Natural killer cell (primary cell): ENCODE measurements at regions of chr17 and their contacts with region 1.

Region 1: DNA sequence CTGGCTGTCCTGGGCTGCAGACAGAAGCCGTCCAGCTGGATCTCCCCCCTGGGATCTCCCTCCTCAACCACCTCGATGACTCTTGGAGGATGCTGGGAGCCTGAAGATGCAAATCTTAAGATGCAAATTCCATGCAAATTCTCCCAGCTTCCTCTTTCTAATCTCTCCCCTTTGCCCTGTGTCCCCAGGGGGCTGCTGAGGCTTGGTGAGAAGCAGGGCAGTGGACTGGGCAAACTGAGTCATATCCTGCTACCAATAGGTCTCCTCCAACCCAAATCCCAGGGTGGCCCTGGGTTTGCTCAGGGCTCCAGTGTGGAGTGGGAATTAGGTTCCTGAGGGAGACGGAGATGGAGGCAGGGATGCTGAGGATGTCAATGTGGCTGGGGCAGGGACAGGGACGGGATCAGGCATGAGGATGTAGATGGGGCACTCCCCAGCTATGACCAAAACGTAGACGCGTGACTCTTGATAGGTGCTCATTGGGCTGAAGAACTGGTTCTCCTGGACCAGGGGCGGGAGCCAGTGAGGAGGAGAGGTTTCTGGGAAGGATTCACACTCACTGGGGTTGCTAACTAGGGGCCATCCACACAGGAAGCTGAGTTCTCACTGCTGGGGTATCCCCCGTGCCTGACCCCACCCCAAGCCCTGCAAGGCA is 3.6 kb upstream of the ALOX12B start:
- DNase-seq: no peak
- ATAC-seq: no peak
- H3K4me3 ChIP-seq: no peak overlapping the region
- H3K4me3 Mint-ChIP-seq: no peak overlapping the region
- H3K27ac ChIP-seq: no peak overlapping the region
- H3K27ac Mint-ChIP-seq: no peak overlapping the region
- H3K4me1 ChIP-seq: peaks cover 10% of the 10 kb centered on the region
- H3K4me1 Mint-ChIP-seq: peaks cover 4% of the 10 kb centered on the region in 2 donors
- H3K27me3 ChIP-seq: no peaks in the 10 kb centered on the region
- H3K27me3 Mint-ChIP-seq: peaks cover 23 to 38% of the 10 kb centered on the region in 2 donors
- CTCF ChIP-seq: no peak

Region 2: DNA sequence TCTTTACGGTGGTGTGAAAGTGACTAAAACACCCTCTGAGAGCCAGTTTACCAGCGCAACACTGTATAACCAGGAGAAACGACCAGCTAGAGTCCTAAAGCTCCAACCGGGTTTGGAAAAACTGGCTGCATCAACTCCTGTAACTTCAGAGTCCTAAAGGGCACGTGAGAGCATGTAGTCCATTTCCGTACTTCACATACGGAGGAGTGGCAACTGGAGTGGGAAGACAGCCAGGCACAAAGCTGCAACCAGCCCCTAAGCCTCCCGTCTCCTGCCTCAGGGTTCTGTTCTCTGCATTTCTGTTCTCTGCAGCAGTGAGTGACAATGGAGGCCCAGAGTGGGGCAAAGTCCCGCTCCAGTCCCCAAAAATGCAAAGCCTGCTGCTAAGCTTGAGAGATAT is 1278.9 kb before region 1 on chr17:
- intact Hi-C with region 1: no loop called
- DNase-seq: no peak
- ATAC-seq: no peak
- H3K4me3 ChIP-seq: no peak overlapping the region
- H3K4me3 Mint-ChIP-seq: no peak overlapping the region
- H3K27ac ChIP-seq: no peak overlapping the region
- H3K27ac Mint-ChIP-seq: no peak overlapping the region
- H3K4me1 ChIP-seq: no peaks in the 10 kb centered on the region
- H3K4me1 Mint-ChIP-seq: no peaks in the 10 kb centered on the region
- H3K27me3 ChIP-seq: no peaks in the 10 kb centered on the region
- H3K27me3 Mint-ChIP-seq: peaks cover 19 to 24% of the 10 kb centered on the region in 2 donors
- CTCF ChIP-seq: no peak

Region 3: DNA sequence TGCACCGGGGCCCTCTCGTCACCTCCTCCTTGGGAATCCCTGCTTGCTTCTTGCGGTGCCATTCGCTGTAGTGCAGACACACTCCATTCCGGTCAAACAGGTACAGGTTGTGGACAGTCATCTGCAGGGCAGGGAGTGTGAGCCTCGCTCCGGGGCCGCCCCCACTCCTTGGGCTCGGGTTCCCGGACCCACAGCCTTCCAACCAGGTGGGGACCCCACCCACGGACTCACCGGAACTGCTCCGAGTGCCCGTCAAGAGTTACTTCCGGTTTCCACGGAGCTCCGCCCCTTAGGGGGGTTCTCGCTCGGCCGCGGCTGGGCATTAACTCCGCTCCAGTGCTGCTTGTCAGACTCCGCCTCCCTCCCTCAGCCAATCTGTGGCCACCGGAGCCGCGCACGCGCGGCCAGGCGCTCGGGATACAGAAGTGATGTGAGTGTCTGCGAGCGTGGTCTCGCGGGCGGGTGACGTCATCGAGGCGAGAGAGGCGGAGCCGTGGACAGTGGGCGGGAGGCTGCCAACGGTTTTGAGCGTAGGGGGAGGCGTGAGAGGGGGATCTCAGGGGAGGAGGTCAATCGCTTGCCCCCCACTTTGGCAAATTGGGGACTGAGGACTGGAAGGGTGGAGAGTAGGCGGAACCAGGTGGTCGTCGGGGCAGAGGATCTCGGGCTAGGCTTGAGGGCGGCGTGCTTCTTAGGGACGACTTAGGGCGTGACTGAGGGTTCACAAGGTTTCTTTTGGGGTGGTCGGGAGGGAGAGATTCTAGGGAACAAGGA is 159.3 kb before region 1 on chr17 and contains the starts of genes CNTROB and TRAPPC1:
- intact Hi-C with region 1: no loop called
- DNase-seq: peak; percentile 99 to 100
- ATAC-seq: peak; percentile 93 to 99 (median 96)
- H3K4me3 ChIP-seq: peak within 1 kb of the TSS; percentile 74
- H3K4me3 Mint-ChIP-seq: peak within 1 kb of the TSS; percentile 99
- H3K27ac ChIP-seq: peak within 1 kb of the TSS; percentile 79
- H3K27ac Mint-ChIP-seq: peak within 1 kb of the TSS; percentile 96 to 98
- H3K4me1 ChIP-seq: peaks cover 31% of the 10 kb centered on the region
- H3K4me1 Mint-ChIP-seq: peaks cover 36 to 56% of the 10 kb centered on the region in 2 donors
- H3K27me3 ChIP-seq: no peaks in the 10 kb centered on the region
- H3K27me3 Mint-ChIP-seq: no peaks in the 10 kb centered on the region
- CTCF ChIP-seq: no peak
- total RNA-seq, gene CNTROB: 36.3 to 49.8 (median 45.2) TPM
- total RNA-seq, gene TRAPPC1: 122 to 144 (median 135) TPM

Region 4: DNA sequence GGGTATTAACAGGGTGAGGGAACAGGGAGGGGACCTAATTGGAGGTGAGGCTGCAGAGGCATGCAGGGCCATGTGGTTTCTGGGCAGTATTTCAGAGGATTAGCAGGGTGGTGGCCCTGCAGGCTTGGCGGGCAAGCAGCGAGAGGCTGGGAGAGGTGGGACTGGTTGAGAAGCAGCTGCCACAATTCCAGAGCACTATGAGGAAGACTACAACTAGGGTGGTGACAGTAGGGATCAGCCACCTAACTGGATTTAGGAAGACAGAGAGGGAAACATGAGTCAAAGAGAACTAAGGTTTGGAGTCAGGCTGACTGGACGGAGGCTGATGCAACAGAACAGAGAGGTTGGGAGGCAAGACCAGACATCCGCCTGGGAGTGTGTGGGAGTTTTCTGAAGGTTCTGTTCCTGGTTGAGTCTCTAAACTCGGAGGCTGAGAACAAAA is 14.8 kb after region 1 on chr17:
- intact Hi-C with region 1: no loop called
- DNase-seq: no peak
- ATAC-seq: no peak
- H3K4me3 ChIP-seq: no peak overlapping the region
- H3K4me3 Mint-ChIP-seq: no peak overlapping the region
- H3K27ac ChIP-seq: no peak overlapping the region
- H3K27ac Mint-ChIP-seq: no peak overlapping the region
- H3K4me1 ChIP-seq: peaks cover 9% of the 10 kb centered on the region
- H3K4me1 Mint-ChIP-seq: peaks cover 0 to 4% of the 10 kb centered on the region in 2 donors
- H3K27me3 ChIP-seq: peaks cover 10% of the 10 kb centered on the region
- H3K27me3 Mint-ChIP-seq: peaks cover 11 to 16% of the 10 kb centered on the region in 2 donors
- CTCF ChIP-seq: no peak

Region 5: DNA sequence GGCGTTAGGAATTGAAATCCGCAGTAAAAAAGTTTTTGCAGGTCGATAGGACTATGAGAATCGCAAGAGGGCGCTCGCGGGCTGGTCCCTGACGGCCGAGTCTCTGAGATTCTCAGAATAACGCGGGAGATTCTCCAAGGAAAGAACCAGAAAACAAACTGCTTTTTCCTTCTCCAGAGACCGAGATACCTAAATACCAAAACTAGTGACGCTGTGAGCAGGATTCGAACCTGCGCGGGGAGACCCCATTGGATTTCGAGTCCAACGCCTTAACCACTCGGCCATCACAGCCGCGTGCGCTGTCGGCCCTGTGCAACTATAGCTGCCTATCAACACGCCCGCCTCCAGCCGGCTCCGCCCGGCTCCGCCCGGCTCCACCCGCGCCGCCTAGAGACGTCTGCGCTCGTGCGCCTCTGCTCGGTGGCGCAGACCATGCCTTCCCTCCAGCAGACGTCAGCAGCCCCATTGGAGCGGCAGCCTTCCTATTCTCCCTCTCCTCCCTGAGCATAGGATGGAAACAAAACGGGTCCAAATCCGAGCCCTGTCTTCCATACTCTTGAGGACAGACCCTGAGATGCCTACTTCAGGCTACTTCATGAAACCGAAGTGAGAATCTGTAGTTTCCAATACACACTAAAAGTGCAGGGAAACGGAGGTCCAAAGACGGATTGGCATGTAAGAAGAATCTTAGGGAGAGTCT is 47.7 kb after region 1 on chr17:
- intact Hi-C with region 1: no loop called
- DNase-seq: peak; percentile 96 to 98
- ATAC-seq: peak; percentile 83 to 96 (median 85)
- H3K4me3 ChIP-seq: peak overlapping the region; percentile 65
- H3K4me3 Mint-ChIP-seq: no peak overlapping the region
- H3K27ac ChIP-seq: peak overlapping the region; percentile 96
- H3K27ac Mint-ChIP-seq: no peak overlapping the region
- H3K4me1 ChIP-seq: peaks cover 28% of the 10 kb centered on the region
- H3K4me1 Mint-ChIP-seq: peaks cover 0 to 3% of the 10 kb centered on the region in 2 donors
- H3K27me3 ChIP-seq: no peaks in the 10 kb centered on the region
- H3K27me3 Mint-ChIP-seq: no peaks in the 10 kb centered on the region
- CTCF ChIP-seq: peak; percentile 93

Region 6: GRCh38 chr17:8300627-8301242 is 209.6 kb after region 1 on chr17:
- intact Hi-C with region 1: loop called (anchors 1 kb)
- DNase-seq: peak; percentile 45 to 87
- ATAC-seq: peak; percentile 91 to 96 (median 93)
- H3K4me3 ChIP-seq: no peak overlapping the region
- H3K4me3 Mint-ChIP-seq: no peak overlapping the region
- H3K27ac ChIP-seq: no peak overlapping the region
- H3K27ac Mint-ChIP-seq: peak overlapping the region in 1 of 2 donors; percentile 5
- H3K4me1 ChIP-seq: peaks cover 6% of the 10 kb centered on the region
- H3K4me1 Mint-ChIP-seq: peaks cover 13 to 16% of the 10 kb centered on the region in 2 donors
- H3K27me3 ChIP-seq: no peaks in the 10 kb centered on the region
- H3K27me3 Mint-ChIP-seq: no peaks in the 10 kb centered on the region
- CTCF ChIP-seq: peak; percentile 87